Motor neuron (in vitro differentiated cells): ENCODE measurements at regions of chr1 and their contacts with region 1.

Region 1: GRCh38 chr1:204565617-204566582 is 49.7 kb downstream of the MDM4 start:
- ATAC-seq: peak; percentile 80 to 95 (median 86)
- H3K4me3 ChIP-seq: peak overlapping the region in 1 of 5 donors; percentile 0
- H3K27ac ChIP-seq: no peak overlapping the region
- H3K4me1 ChIP-seq: peaks cover 35 to 36% of the 10 kb centered on the region in 2 donors

Region 2: DNA sequence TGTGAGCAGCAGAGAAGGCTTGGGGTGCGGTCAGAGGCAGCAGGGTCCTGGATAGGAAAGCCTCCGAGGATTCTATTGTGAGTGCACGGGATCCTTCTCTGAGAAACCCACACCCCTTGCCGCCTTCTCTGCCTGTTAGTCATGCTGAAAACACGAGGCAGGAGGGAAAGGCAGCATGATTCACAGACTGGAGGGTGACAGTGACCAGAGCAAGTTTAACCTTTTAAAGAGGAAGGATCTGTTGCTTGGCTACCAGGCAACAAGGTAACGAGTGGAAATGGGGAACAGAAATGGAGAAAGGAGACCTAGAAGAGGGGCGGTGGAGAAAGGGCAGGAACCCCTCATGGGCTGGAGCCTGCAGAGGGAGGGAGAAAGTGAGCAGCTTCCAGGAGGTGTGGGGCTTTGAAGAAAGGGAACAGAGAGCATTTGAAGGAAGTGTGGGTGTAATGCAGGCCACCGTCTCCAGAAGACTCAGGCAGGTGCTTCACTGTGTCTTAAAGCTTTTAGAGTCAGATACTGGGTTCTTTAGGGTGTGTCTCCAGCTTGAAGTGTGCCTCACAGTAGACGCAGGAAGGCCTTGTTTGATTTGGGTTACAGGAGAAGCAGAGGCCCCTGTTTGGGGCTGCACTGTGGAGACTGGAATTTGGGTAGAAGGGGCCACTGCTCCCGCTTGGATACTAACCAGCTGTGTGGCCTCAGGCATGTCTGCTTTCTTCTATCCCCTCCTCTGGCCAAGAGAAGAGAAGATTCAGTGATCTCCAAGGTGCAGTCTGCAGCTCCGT is 1052.9 kb before region 1 on chr1:
- in situ Hi-C with region 1: no loop called
- ATAC-seq: peak; percentile 25 to 93 (median 60)
- H3K4me3 ChIP-seq: no peak overlapping the region
- H3K27ac ChIP-seq: peak overlapping the region; percentile 34 to 45
- H3K4me1 ChIP-seq: peaks cover 68 to 71% of the 10 kb centered on the region in 2 donors

Region 3: DNA sequence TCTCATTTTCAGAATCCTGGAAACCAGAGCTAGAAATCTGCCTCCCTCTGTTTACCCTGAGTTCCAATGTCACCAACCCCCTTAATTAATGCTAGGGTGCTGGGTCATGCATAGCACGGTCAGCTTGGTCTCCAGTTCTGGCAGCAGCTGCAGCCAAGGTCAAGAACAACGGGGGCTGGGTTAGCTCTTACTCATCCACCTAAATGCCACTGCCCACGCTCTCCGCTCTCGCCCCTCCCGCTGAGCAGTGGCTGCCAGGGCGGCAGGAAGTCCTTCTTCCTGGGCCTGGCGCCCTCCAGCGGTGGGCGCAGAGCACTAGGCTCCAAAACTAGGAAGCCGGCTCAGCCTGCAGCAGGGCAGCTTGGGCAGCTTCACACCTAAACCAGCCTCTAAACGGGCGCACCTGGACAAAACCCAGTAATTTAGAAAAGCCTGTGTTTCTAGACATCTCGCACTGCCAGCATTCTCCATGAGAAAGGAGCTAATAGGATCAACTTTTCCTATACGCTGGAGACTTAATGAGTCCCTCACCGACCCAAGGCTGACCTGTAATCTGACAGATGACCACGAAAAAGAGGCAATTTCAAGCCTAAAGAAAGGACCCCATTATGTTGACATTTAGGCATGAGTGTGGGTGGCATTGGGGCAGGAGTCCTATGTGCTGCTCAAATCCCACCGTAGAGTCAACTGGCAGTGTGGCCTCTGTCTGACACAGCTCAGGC is 198.0 kb after region 1 on chr1:
- in situ Hi-C with region 1: loop called in 2 of 9 experiments (anchors 25 kb)
- ATAC-seq: peak; percentile 94 to 99 (median 98)
- H3K4me3 ChIP-seq: no peak overlapping the region
- H3K27ac ChIP-seq: no peak overlapping the region
- H3K4me1 ChIP-seq: peaks cover 26 to 32% of the 10 kb centered on the region in 2 donors

Region 4: DNA sequence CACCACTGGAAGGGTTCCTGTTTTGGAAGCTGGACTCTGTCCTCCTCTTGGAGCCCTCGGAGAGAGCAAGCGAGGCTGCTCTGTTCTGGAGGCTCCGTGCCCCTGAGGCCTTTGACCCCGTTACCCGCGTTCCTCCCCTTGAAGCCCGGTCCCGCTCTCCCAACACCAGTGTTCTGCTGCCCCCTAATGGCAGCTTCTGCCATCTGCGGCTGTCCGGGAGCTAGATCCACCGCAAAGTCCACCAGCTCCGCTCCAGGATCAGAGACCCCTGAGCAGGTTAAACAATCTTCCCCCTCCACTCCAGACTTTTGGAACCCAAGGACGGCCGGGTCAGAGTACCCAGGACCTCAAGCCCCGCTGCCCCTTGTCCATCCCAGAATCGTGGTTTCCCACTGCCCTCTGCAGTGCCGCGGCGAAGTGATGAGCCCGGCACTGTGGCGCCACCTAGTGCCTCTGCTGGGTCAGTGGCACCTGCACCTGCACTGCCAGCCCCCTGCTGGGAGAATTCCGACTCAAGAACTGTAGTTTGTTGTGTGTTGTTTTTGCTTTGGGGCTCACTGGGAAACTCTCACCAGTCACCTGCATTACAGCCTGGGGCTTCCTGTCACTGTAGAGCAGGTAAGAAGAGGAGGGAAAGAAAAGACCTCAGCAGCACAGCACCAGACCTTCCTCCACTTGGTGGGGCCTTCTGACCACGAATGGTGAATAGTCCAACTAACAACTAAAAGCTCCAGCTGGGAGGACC is 241.2 kb after region 1 on chr1:
- in situ Hi-C with region 1: loop called in 7 of 9 experiments (anchors 5 to 25 kb)
- ATAC-seq: peak; percentile 96 to 98 (median 97)
- H3K4me3 ChIP-seq: peak overlapping the region; percentile 51 to 56 (median 52)
- H3K27ac ChIP-seq: peak overlapping the region; percentile 45 to 57
- H3K4me1 ChIP-seq: peaks cover 2 to 12% of the 10 kb centered on the region in 2 donors

Region 5: GRCh38 chr1:204819495-204819894 is 253.6 kb after region 1 on chr1:
- in situ Hi-C with region 1: loop called in 3 of 9 experiments (anchors 10 to 25 kb)
- ATAC-seq: peak in 5 of 8 experiments; percentile 81 to 98 (median 97)
- H3K4me3 ChIP-seq: no peak overlapping the region
- H3K27ac ChIP-seq: no peak overlapping the region
- H3K4me1 ChIP-seq: peaks cover 26 to 28% of the 10 kb centered on the region in 2 donors

Region 6: DNA sequence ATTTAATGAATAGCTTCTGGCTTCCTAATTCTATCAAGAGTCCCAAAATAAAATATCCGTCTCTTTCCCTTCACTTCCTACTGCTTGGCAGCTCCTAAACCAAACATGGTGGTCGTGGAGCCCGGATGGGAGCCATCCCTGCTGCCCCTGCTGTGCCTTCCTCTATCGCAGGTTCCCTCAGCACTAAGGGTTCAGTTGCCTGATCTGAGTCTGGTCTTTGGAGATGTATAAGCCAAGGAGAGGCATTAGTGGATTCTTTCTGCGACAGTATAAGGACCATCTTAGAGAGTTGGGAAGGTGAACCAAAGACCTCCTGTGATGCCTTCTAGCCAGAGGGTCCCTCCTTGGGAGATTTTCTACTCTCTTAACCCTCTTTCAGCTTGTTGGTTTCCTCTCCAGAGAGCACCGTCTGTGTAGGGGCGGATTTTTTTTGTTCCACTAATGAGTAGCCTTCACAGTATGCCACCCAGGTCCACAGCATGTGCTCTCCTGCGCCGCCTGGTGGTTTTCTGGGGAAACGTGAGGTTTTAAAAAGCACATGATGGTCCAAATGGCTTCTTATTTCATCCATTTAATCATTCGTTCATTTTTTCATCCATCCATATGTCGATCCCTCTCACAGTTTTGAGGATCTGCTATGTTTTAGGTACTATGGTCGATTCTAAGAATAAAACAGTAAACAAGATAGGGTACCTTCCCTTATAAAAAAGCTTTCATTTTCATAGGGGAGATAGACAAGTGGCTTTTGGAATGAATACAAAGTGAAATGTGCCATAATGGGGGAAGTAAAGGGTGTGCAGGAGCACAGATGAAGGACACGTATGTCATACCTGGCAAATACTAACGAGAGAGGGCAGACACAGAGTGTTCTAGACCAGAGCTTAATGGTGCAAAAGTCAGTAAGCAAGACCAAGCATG is 375.8 kb after region 1 on chr1:
- in situ Hi-C with region 1: loop called in 3 of 9 experiments (anchors 25 kb)
- ATAC-seq: peak; percentile 60 to 83 (median 74)
- H3K4me3 ChIP-seq: no peak overlapping the region
- H3K27ac ChIP-seq: no peak overlapping the region
- H3K4me1 ChIP-seq: peaks cover 31 to 41% of the 10 kb centered on the region in 2 donors

Region 7: GRCh38 chr1:205227584-205228006 is 661.7 kb after region 1 on chr1 and contains the start of gene TMCC2:
- in situ Hi-C with region 1: loop called in 1 of 9 experiments (anchors 25 kb)
- ATAC-seq: peak; percentile 86 to 96 (median 96)
- H3K4me3 ChIP-seq: peak within 1 kb of the TSS; percentile 58 to 94 (median 79)
- H3K27ac ChIP-seq: no peak within 1 kb of the TSS
- H3K4me1 ChIP-seq: peaks cover 17 to 20% of the 10 kb centered on the region in 2 donors
- total RNA-seq, gene TMCC2: 2.8 to 27.0 (median 15.3) TPM